ENCODE measurements at regions of chr16 and their contacts with region 1.

Region 1: DNA sequence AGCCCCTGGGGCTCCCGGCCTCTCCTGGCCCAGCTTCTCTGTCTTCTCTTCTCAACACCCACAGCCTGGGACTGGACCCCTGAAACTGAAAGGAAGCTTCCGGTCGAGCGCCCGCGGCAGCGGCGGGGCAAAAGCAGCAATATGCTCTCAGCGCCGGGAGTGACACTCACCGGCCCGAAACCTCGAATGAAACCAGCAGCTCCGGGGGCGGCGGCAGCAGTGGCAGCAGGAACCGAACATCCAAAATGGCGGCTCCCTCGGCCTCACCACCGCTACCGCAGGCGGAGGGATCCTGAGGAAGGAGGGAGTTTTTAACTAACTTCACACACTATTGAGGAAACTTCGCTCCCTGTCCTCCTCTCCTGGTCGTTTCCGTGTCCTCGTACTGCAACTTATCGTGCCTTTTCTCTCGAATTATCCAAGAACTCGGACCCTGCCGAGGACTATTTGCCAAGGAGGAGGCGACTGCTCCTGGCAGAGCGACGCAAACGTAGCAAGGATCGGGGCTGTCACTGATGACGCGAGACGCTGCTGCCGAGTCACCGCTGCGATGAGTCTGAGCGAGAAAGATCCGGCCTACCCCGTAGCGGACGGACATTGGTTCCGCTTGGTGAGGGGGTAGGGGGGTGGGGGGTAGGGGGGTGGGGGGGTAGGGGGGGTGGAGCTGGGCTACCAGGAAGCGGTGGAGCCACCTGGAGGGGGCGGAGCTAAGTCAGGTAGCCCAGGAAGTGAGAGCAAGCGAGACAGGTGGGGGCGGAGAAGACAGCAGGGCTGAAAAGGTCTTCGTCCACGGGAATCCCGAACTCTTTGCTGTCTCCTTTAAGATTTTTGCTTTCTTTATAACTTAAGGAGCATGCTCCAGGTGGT is at the start of gene AP1G1:
- DNase-seq: peak; percentile 96
- H3K4me3 Mint-ChIP-seq: peak within 1 kb of the TSS; percentile 90
- H3K27ac Mint-ChIP-seq: peak within 1 kb of the TSS; percentile 99
- H3K4me1 Mint-ChIP-seq: peaks cover 38% of the 10 kb centered on the region
- H3K27me3 Mint-ChIP-seq: no peaks in the 10 kb centered on the region
- total RNA-seq, gene AP1G1: 65.9 to 66.9 TPM

Region 2: GRCh38 chr16:71775949-71776348 is 32.9 kb before region 1 on chr16:
- CTCF ChIA-PET with region 1: no interaction called
- POLR2A ChIA-PET with region 1: no interaction called
- intact Hi-C with region 1: loop called (anchors 2 kb)
- DNase-seq: no peak
- H3K4me3 Mint-ChIP-seq: no peak overlapping the region
- H3K27ac Mint-ChIP-seq: peak overlapping the region; percentile 57
- H3K4me1 Mint-ChIP-seq: peaks cover 34% of the 10 kb centered on the region
- H3K27me3 Mint-ChIP-seq: no peaks in the 10 kb centered on the region

Region 3: GRCh38 chr16:71845639-71846430 is 37.0 kb after region 1 on chr16 and contains the start of gene ATXN1L:
- CTCF ChIA-PET with region 1: interaction called, 5 read pairs
- POLR2A ChIA-PET with region 1: interaction called, 7 read pairs
- intact Hi-C with region 1: loop called (anchors 1 kb)
- DNase-seq: peak; percentile 95
- H3K4me3 Mint-ChIP-seq: peak within 1 kb of the TSS; percentile 91
- H3K27ac Mint-ChIP-seq: peak within 1 kb of the TSS; percentile 92
- H3K4me1 Mint-ChIP-seq: peaks cover 41% of the 10 kb centered on the region
- H3K27me3 Mint-ChIP-seq: no peaks in the 10 kb centered on the region
- total RNA-seq, gene ATXN1L: 14.6 to 15.1 TPM

Region 4: GRCh38 chr16:71894921-71895678 is 86.3 kb after region 1 on chr16 and contains the start of gene IST1:
- CTCF ChIA-PET with region 1: interaction called, 15 read pairs
- POLR2A ChIA-PET with region 1: interaction called, 19 read pairs
- intact Hi-C with region 1: loop called (anchors 1 kb)
- DNase-seq: peak; percentile 99
- H3K4me3 Mint-ChIP-seq: peak within 1 kb of the TSS; percentile 95
- H3K27ac Mint-ChIP-seq: peak within 1 kb of the TSS; percentile 97
- H3K4me1 Mint-ChIP-seq: peaks cover 27% of the 10 kb centered on the region
- H3K27me3 Mint-ChIP-seq: no peaks in the 10 kb centered on the region
- total RNA-seq, gene IST1: 191 to 192 TPM

Region 5: DNA sequence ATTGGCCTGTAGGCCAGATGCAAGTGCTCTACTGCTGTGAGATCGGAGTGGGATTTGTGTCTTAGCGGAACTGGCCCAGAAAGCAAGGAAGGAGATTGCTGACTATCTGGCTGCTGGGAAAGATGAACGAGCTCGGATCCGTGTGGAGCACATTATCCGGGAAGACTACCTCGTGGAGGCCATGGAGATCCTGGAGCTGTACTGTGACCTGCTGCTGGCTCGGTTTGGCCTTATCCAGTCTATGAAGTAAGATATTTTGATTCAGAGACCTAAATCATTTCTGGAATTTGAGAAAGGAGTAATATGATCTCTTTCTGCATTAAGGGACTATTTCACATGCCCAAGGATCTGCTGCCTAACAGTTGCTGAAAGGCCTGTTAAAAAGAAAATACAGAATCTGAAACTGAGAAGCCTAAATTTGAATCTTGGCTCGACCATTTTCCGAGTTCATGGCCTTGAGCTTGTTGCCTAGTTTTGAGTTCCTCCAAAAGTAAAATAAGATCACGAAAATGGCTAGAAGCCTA is 107.6 kb after region 1 on chr16:
- CTCF ChIA-PET with region 1: no interaction called
- POLR2A ChIA-PET with region 1: no interaction called
- intact Hi-C with region 1: no loop called
- DNase-seq: no peak
- H3K4me3 Mint-ChIP-seq: no peak overlapping the region
- H3K27ac Mint-ChIP-seq: peak overlapping the region; percentile 1
- H3K4me1 Mint-ChIP-seq: peaks cover 37% of the 10 kb centered on the region
- H3K27me3 Mint-ChIP-seq: no peaks in the 10 kb centered on the region

Region 6: DNA sequence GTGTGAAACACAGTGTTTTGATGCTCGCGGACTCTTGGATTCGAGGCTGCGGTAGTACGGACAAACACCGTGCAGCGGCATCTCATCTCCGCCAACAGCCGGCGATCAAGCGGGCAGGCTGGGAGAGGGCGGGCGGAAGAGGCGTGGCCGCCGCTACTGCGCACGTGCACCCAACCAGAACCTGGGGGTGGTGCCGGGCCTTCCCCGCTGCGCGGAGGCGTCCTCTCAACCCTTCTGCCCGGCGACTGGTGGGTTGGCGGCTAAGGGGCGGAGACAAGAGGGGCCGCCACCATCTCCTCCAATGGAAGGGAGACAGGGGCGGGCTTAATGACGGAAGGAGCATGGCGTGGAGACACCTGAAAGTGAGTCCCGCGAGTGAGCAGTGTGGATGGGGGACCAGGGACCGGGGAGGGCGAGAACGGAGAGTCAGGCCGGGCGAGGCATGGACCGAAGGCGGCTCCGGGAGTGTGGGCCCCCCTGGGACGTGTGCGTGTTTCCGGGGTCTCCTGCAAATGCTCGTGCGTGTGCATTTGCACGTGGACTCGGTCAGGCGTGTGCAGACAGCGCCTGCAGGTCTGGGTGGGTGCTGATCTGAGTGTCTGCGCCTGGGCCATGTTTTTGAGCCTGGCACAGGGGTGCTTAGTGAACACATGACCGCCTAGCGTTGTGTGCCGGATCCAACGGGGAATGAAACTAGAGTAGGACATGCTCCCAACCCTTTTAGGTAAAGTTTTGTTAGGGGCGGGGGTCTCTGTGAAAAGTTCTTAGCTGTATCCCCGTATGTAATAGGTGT is 199.8 kb after region 1 on chr16 and contains the start of gene DHODH:
- CTCF ChIA-PET with region 1: no interaction called
- POLR2A ChIA-PET with region 1: no interaction called
- intact Hi-C with region 1: loop called (anchors 1 kb)
- DNase-seq: peak; percentile 99
- H3K4me3 Mint-ChIP-seq: peak within 1 kb of the TSS; percentile 91
- H3K27ac Mint-ChIP-seq: peak within 1 kb of the TSS; percentile 76
- H3K4me1 Mint-ChIP-seq: peaks cover 21% of the 10 kb centered on the region
- H3K27me3 Mint-ChIP-seq: no peaks in the 10 kb centered on the region
- total RNA-seq, gene DHODH: 16.9 to 18.6 TPM